Mucosa of descending colon (tissue), 3 donors: ENCODE measurements at regions of chrX and their contacts with region 1.

Region 1: GRCh38 chrX:70454441-70455365 is 10.1 kb downstream of the DLG3 start:
- DNase-seq: peak; percentile 89 to 93 (median 91)
- ATAC-seq: peak; percentile 86
- H3K4me3 ChIP-seq: peak overlapping the region; percentile 24
- H3K4me1 ChIP-seq: peaks cover 5% of the 10 kb centered on the region
- CTCF ChIP-seq: peak; percentile 48

Region 2: GRCh38 chrX:70494441-70494840 is 39.7 kb after region 1 on chrX:
- intact Hi-C with region 1: no loop called
- DNase-seq: no peak
- ATAC-seq: peak; percentile 15
- H3K4me3 ChIP-seq: no peak overlapping the region
- H3K4me1 ChIP-seq: no peaks in the 10 kb centered on the region
- CTCF ChIP-seq: no peak

Region 3: DNA sequence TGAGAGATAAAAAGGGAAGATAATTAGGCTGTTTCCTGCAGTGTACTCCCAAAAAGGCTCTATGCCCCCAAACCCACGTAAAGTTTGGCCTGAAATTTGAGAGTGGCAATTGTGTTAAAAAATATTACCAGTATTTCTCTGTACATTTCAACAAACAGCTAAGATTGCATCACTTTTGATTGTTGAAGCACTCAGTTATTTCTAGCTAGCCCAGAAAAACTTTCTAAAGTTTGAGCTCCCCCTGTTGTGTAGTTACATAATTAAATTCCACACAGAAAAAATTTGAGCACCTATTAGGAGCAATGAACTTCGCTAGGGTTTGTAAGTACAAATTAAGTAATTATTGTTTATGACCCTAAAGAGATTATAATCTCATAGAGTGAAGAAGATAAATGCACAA is 99.4 kb after region 1 on chrX:
- intact Hi-C with region 1: loop called in 1 of 2 experiments (anchors 10 kb)
- DNase-seq: no peak
- ATAC-seq: peak; percentile 51
- H3K4me3 ChIP-seq: no peak overlapping the region
- H3K4me1 ChIP-seq: peaks cover 3% of the 10 kb centered on the region
- CTCF ChIP-seq: no peak